ENCODE measurements at regions of chr12 and their contacts with region 1.

Region 1: GRCh38 chr12:52310622-52311284 is 10.4 kb downstream of the KRT83 start:
- DNase-seq: peak; percentile 48
- H3K4me3 ChIP-seq: no peak overlapping the region
- H3K27ac ChIP-seq: no peak overlapping the region
- H3K4me1 ChIP-seq: peaks cover 14% of the 10 kb centered on the region
- H3K27me3 ChIP-seq: no peaks in the 10 kb centered on the region
- CTCF ChIP-seq: no peak

Region 2: GRCh38 chr12:52285172-52285745 is 25.5 kb before region 1 on chr12:
- CTCF ChIA-PET with region 1: no interaction called
- dilution Hi-C with region 1: no loop called
- in situ Hi-C with region 1: no loop called
- intact Hi-C with region 1: loop called (anchors 2 kb)
- DNase-seq: peak; percentile 82
- H3K4me3 ChIP-seq: no peak overlapping the region
- H3K27ac ChIP-seq: peak overlapping the region; percentile 54
- H3K4me1 ChIP-seq: peaks cover 59% of the 10 kb centered on the region
- H3K27me3 ChIP-seq: no peaks in the 10 kb centered on the region
- CTCF ChIP-seq: no peak

Region 3: GRCh38 chr12:52358575-52359350 is 48.0 kb after region 1 on chr12:
- CTCF ChIA-PET with region 1: no interaction called
- dilution Hi-C with region 1: no loop called
- in situ Hi-C with region 1: no loop called
- intact Hi-C with region 1: no loop called
- DNase-seq: no peak
- H3K4me3 ChIP-seq: no peak overlapping the region
- H3K27ac ChIP-seq: no peak overlapping the region
- H3K4me1 ChIP-seq: peaks cover 3% of the 10 kb centered on the region
- H3K27me3 ChIP-seq: no peaks in the 10 kb centered on the region
- CTCF ChIP-seq: no peak

Measured in mammary epithelial cell (primary cell).